Sigmoid colon (tissue), 7 donors: ENCODE measurements at regions of chr3 and their contacts with region 1.

Region 1: GRCh38 chr3:194315088-194315964 is 35.8 kb downstream of the CPN2 start:
- DNase-seq: peak; percentile 94
- H3K4me3 ChIP-seq: peak overlapping the region; percentile 22 to 49 (median 40)
- H3K27ac ChIP-seq: peak overlapping the region; percentile 58 to 90 (median 74)
- H3K4me1 ChIP-seq: peaks cover 0 to 48% (median 42%) of the 10 kb centered on the region in 4 donors
- H3K27me3 ChIP-seq: no peaks in the 10 kb centered on the region
- CTCF ChIP-seq: peak; percentile 82 to 92 (median 88)
- EP300 ChIP-seq: peak in 3 of 4 donors; percentile 1 to 44 (median 35)
- POLR2A ChIP-seq: no peak

Region 2: DNA sequence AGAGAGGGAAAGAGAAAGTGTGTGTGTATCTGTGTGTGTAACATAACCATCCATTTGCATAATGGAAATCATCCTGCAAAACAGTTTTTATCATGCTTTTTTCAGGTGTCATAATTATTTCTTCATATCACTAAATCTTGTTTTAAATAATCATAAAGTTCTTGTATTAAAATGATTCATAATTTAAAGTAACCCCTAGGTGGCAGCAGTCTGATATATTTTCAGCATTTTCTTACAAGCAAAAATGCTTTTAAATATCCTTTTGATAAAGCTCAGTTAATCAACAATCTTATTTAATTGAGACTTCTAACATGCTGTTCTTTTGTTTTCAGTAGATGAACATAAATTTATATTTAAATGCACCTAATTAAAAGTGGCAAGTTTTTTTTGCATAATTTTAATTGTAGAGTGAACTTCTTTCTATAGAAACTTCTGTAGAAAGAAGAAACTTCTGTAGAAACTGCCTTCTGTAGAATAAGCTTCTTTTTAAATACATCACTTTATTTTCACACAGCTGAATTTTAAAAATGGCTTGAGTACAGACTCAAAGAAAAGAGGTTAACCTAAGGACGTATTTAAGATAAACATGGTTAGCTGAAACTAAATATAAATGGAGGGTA is 649.8 kb before region 1 on chr3:
- intact Hi-C with region 1: loop called (anchors 5 kb)
- DNase-seq: no peak
- H3K4me3 ChIP-seq: no peak overlapping the region
- H3K27ac ChIP-seq: no peak overlapping the region
- H3K4me1 ChIP-seq: no peaks in the 10 kb centered on the region
- H3K27me3 ChIP-seq: no peaks in the 10 kb centered on the region
- CTCF ChIP-seq: peak in 2 of 4 experiments; percentile 16 to 29
- EP300 ChIP-seq: no peak
- POLR2A ChIP-seq: no peak

Region 3: GRCh38 chr3:193788189-193788991 is 526.9 kb before region 1 on chr3:
- intact Hi-C with region 1: loop called (anchors 2 kb)
- DNase-seq: peak; percentile 84
- H3K4me3 ChIP-seq: no peak overlapping the region
- H3K27ac ChIP-seq: peak overlapping the region; percentile 30 to 61 (median 47)
- H3K4me1 ChIP-seq: peaks cover 3 to 18% (median 11%) of the 10 kb centered on the region in 4 donors
- H3K27me3 ChIP-seq: no peaks in the 10 kb centered on the region
- CTCF ChIP-seq: peak; percentile 25 to 81 (median 74)
- EP300 ChIP-seq: no peak
- POLR2A ChIP-seq: no peak

Region 4: DNA sequence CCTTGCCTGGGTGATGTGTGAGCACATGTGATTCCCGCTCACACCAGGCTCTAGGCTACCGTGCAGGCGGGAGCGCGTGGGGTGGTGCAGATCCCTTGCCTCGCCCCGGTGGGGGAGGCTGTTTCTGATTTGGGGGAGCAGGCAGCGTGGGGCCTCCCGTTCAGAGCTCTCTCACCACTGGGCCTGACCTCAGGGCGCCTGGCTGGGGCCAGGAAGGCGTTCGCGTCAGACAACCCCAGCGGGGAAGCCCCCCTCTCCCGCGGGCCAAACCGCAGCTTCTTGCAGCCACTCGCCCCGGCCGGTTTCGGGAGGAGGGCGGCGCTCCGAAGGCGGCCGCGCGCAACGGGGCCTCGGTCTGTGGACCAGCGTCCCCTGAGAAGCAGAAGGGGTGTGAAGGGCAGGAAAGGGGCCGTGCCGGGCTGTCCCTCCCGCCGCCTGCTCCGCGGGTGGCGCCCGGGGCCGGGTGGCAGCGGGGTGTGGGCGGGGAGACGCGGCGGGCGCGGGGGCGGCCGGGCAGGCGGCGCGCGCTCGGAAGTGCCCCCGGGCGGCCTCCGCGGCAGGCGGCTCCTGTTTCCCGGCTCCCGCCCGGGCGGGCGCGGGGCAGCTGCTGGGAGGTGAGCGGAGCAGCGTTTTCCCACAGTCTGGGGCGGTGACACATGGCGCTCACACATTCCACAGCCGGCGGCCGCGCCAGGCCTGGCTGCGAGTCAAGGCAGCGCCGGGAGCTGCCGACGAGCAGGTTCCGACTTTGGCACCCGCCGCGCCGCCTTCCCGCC is 244.5 kb before region 1 on chr3:
- intact Hi-C with region 1: loop called (anchors 5 kb)
- DNase-seq: peak; percentile 88
- H3K4me3 ChIP-seq: peak overlapping the region; percentile 37 to 64 (median 56)
- H3K27ac ChIP-seq: peak overlapping the region; percentile 80 to 85 (median 82)
- H3K4me1 ChIP-seq: peaks cover 0 to 18% (median 16%) of the 10 kb centered on the region in 4 donors
- H3K27me3 ChIP-seq: no peaks in the 10 kb centered on the region
- CTCF ChIP-seq: no peak
- EP300 ChIP-seq: no peak
- POLR2A ChIP-seq: no peak

Region 5: DNA sequence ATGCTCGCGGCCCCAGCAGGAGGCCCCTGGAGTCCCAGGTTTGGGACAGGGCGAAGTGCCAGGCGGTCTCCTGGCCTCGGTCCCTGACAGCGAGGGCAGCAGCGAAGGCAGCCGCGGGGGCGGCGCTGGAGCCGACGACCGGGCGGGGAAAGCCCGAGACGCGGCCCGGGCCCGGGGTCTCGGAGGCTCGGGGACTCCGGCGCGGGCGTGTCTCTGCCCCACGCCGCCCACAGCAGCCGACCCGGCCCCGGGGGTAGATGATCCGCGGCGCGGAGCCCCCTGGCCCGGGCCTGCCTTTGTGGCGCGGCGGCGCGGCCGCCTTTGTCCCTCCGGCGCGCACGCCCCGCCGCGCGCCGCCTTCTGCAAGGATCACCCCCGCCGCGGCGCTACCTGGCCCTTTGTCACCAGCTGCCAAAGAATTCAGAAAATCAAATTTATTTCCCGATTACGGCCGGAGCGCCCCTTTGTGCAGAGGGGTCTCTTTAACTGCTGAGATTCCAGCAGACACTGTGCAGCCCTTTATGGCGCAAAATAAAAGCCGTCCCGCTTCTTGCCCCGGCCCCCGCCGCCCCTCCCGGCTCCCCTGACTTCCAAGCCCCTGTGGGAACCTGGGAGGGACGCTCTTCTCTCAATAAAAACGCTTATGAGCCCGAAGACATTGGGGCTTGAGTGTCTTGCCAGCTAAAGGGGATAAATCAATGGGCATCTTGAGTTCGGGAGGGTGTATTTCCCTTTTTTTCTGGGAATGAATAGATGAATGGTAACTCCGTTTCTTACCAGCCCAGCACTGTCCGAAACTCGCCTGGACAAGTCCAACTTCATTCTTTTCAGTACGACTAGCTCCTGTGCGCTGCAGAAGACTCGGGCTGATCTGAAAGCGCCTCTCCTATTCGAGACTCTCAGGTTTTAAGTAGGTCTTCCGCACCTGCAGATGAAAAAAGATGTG is 111.0 kb before region 1 on chr3:
- intact Hi-C with region 1: loop called (anchors 5 kb)
- DNase-seq: peak; percentile 44
- H3K4me3 ChIP-seq: peak overlapping the region in 3 of 4 donors; percentile 29 to 43 (median 41)
- H3K27ac ChIP-seq: no peak overlapping the region
- H3K4me1 ChIP-seq: peaks cover 0 to 26% (median 21%) of the 10 kb centered on the region in 4 donors
- H3K27me3 ChIP-seq: peaks cover 7 to 25% (median 13%) of the 10 kb centered on the region in 3 donors
- CTCF ChIP-seq: no peak
- EP300 ChIP-seq: no peak
- POLR2A ChIP-seq: no peak

Region 6: DNA sequence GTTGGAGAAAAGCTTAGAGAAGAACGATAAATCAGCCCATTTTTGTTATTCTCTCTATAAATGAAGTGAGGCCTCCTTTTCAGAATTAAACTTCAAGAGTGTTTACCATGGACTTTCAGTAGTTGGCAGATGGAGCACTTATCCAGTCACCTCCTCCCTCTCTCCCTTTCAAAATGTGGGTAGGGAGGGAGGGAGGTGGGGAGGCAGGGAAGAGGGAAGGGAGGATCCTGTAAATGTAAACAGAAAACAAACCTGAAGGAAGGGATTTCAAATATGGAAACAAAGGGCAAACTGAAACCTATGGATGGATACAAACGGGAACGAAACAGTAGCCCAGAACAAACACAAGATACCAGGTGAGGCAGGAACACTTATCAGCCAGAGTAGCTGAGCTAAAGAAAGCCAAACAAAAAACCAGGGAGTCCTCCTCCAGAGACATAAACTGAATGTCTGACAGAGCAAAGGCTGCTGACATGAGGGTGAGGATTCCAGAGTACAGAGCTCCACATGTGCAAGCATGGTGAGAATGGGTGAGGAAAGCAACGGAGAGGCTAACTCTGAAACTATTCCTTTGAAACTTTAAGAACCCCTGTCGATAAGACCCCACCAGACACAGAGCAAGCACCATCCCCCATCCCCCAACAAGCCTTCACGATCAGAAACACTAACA is 124.7 kb after region 1 on chr3:
- intact Hi-C with region 1: no loop called
- DNase-seq: no peak
- H3K4me3 ChIP-seq: no peak overlapping the region
- H3K27ac ChIP-seq: no peak overlapping the region
- H3K4me1 ChIP-seq: no peaks in the 10 kb centered on the region
- H3K27me3 ChIP-seq: no peaks in the 10 kb centered on the region
- CTCF ChIP-seq: no peak
- EP300 ChIP-seq: no peak
- POLR2A ChIP-seq: no peak

Region 7: DNA sequence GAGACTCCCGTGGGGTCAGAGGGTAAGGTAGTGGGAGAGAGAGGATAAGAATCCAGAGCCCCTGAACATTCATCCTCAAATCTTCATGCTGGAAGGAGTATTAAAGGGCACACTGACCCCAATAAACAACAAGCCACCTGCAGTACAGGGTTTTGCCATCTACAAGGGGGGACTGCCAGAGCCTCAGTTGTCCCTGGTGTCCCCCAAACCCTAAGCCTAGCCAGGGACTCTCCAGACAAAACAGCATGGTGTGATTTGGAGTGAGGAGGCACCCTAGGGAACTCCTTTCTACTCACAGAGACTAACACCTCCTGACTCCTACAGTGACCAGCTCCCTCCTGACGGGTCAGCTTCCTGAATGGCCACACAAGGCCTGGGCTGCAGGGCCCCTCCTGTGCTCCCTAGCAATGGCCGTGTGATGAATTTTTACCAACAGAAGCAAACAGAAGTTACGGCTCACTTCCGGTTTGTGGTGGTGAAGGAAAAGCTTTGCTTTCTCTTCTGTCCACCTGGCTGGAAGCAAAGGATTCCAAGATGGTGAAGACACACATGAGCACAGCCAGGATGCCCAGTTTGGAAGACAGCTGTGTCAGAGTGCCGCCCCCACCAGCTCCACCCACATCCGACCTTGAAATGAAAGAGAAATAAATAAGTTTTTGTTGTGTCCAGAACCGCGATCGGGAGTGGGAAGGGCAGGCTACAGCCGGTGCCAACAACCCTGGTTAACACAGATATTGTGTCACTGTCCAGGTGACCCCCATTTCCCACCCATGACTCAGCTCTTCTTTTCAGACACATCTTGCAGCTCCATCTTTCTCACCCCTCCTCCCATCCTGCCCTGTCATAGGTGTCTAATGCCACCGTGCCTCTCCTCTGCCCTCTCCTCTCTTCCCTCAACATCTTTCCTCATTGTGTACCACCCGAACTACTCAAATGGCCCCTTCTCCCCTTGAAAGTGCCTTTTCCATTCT is 241.0 kb after region 1 on chr3:
- intact Hi-C with region 1: no loop called
- DNase-seq: no peak
- H3K4me3 ChIP-seq: peak overlapping the region in 1 of 4 donors; percentile 14
- H3K27ac ChIP-seq: no peak overlapping the region
- H3K4me1 ChIP-seq: no peaks in the 10 kb centered on the region
- H3K27me3 ChIP-seq: no peaks in the 10 kb centered on the region
- CTCF ChIP-seq: no peak
- EP300 ChIP-seq: no peak
- POLR2A ChIP-seq: no peak

Region 8: DNA sequence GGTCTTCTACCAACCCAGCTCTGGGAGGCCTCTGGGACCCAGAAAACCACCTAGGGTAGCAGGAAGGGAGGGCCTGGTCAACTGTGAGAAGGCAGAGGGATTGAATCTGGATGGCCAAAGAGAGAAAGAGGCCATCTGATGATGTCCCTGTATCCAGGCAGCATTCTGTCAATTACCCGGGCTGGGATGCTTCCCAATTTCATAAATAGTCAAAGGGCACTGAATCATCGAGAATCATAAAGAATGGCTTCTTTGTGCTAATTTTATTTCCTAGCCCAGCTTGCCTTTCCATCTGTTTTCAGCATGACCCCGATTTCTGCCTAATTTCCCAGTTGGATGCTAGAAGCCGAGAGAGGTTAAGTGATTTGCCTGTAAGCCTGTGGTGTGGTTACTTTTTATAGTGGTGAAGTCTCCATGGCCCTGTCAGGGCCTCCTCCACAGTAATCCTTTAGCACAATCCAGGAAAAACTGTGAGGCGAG is 499.6 kb after region 1 on chr3:
- intact Hi-C with region 1: no loop called
- DNase-seq: no peak
- H3K4me3 ChIP-seq: no peak overlapping the region
- H3K27ac ChIP-seq: peak overlapping the region in 2 of 4 donors; percentile 39 to 41
- H3K4me1 ChIP-seq: no peaks in the 10 kb centered on the region
- H3K27me3 ChIP-seq: no peaks in the 10 kb centered on the region
- CTCF ChIP-seq: no peak
- EP300 ChIP-seq: no peak
- POLR2A ChIP-seq: no peak